CD8-positive, alpha-beta T cell (primary cell): ENCODE measurements at regions of chr4 and their contacts with region 1.

Region 1: DNA sequence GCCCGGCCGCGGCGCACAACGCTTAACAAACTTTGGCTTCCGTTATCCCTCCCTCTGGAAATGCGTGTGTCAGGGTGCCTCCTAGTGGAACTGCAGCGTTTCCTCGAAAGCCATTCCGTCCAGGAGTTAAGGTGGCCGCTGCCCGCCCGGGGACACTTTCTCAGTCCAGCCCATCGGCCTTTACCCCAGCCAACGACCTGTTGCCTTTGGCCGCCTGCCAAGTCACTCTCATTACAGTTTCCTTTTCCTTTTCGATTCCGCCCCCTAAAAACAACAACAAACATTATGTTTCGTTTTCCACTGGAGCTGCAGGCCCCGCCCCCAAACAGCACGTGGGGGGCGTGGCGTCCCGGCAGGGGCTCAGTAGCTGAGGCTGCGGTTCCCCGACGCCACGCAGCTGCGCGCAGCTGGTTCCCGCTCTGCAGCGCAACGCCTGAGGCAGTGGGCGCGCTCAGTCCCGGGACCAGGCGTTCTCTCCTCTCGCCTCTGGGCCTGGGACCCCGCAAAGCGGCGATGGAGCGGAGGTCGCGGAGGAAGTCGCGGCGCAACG is at the start of gene HERC5:
- DNase-seq: peak; percentile 83 to 96 (median 91)
- ATAC-seq: peak; percentile 95
- H3K4me3 ChIP-seq: peak within 1 kb of the TSS; percentile 79 to 87
- H3K4me3 Mint-ChIP-seq: peak within 1 kb of the TSS; percentile 100
- H3K27ac ChIP-seq: peak within 1 kb of the TSS; percentile 63 to 74
- H3K27ac Mint-ChIP-seq: peak within 1 kb of the TSS; percentile 100
- H3K4me1 ChIP-seq: peaks cover 13% of the 10 kb centered on the region
- H3K4me1 Mint-ChIP-seq: peaks cover 33% of the 10 kb centered on the region
- H3K27me3 ChIP-seq: no peaks in the 10 kb centered on the region
- H3K27me3 Mint-ChIP-seq: no peaks in the 10 kb centered on the region
- CTCF ChIP-seq: no peak
- total RNA-seq, gene HERC5: 13.2 to 13.5 TPM

Region 2: GRCh38 chr4:87895964-87896621 is 560.7 kb before region 1 on chr4:
- CTCF ChIA-PET with region 1: no interaction called
- POLR2A ChIA-PET with region 1: no interaction called
- intact Hi-C with region 1: no loop called
- DNase-seq: peak in 4 of 9 experiments; percentile 2 to 32 (median 14)
- ATAC-seq: no peak
- H3K4me3 ChIP-seq: no peak overlapping the region
- H3K4me3 Mint-ChIP-seq: no peak overlapping the region
- H3K27ac ChIP-seq: no peak overlapping the region
- H3K27ac Mint-ChIP-seq: no peak overlapping the region
- H3K4me1 ChIP-seq: no peaks in the 10 kb centered on the region
- H3K4me1 Mint-ChIP-seq: peaks cover 6% of the 10 kb centered on the region
- H3K27me3 ChIP-seq: no peaks in the 10 kb centered on the region
- H3K27me3 Mint-ChIP-seq: peaks cover 6% of the 10 kb centered on the region
- CTCF ChIP-seq: no peak

Region 3: DNA sequence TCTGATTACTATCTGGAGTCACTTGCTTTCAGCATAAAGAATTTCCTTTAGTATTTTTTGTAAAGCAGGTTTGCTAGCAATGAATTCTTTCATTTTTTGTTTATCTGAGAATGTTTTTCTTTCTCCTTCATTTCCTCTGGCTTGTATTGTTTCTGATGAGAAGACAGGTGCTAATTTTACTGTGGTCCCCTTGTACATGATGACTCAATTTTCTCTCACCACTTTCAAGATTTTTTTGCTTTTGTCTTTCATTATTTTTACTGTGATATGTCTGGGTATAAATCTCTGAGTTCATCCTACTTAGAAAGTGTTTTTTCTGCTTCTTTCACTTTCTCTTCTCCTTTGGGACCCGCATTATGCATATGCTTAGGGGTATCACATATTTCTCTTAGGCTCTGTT is 386.8 kb before region 1 on chr4:
- CTCF ChIA-PET with region 1: no interaction called
- POLR2A ChIA-PET with region 1: no interaction called
- intact Hi-C with region 1: no loop called
- DNase-seq: no peak
- ATAC-seq: no peak
- H3K4me3 ChIP-seq: no peak overlapping the region
- H3K4me3 Mint-ChIP-seq: no peak overlapping the region
- H3K27ac ChIP-seq: no peak overlapping the region
- H3K27ac Mint-ChIP-seq: no peak overlapping the region
- H3K4me1 ChIP-seq: no peaks in the 10 kb centered on the region
- H3K4me1 Mint-ChIP-seq: no peaks in the 10 kb centered on the region
- H3K27me3 ChIP-seq: no peaks in the 10 kb centered on the region
- H3K27me3 Mint-ChIP-seq: no peaks in the 10 kb centered on the region
- CTCF ChIP-seq: no peak

Region 4: GRCh38 chr4:88217920-88218319 is 238.9 kb before region 1 on chr4:
- CTCF ChIA-PET with region 1: interaction called, 5 read pairs
- POLR2A ChIA-PET with region 1: no interaction called
- intact Hi-C with region 1: loop called in 1 of 2 experiments (anchors 2 kb)
- DNase-seq: no peak
- ATAC-seq: no peak
- H3K4me3 ChIP-seq: no peak overlapping the region
- H3K4me3 Mint-ChIP-seq: no peak overlapping the region
- H3K27ac ChIP-seq: no peak overlapping the region
- H3K27ac Mint-ChIP-seq: no peak overlapping the region
- H3K4me1 ChIP-seq: no peaks in the 10 kb centered on the region
- H3K4me1 Mint-ChIP-seq: peaks cover 6% of the 10 kb centered on the region
- H3K27me3 ChIP-seq: no peaks in the 10 kb centered on the region
- H3K27me3 Mint-ChIP-seq: peaks cover 8% of the 10 kb centered on the region
- CTCF ChIP-seq: no peak

Region 5: GRCh38 chr4:88251924-88252323 is 204.9 kb before region 1 on chr4:
- CTCF ChIA-PET with region 1: no interaction called
- POLR2A ChIA-PET with region 1: no interaction called
- intact Hi-C with region 1: no loop called
- DNase-seq: no peak
- ATAC-seq: no peak
- H3K4me3 ChIP-seq: no peak overlapping the region
- H3K4me3 Mint-ChIP-seq: no peak overlapping the region
- H3K27ac ChIP-seq: no peak overlapping the region
- H3K27ac Mint-ChIP-seq: no peak overlapping the region
- H3K4me1 ChIP-seq: no peaks in the 10 kb centered on the region
- H3K4me1 Mint-ChIP-seq: no peaks in the 10 kb centered on the region
- H3K27me3 ChIP-seq: no peaks in the 10 kb centered on the region
- H3K27me3 Mint-ChIP-seq: no peaks in the 10 kb centered on the region
- CTCF ChIP-seq: no peak

Region 6: DNA sequence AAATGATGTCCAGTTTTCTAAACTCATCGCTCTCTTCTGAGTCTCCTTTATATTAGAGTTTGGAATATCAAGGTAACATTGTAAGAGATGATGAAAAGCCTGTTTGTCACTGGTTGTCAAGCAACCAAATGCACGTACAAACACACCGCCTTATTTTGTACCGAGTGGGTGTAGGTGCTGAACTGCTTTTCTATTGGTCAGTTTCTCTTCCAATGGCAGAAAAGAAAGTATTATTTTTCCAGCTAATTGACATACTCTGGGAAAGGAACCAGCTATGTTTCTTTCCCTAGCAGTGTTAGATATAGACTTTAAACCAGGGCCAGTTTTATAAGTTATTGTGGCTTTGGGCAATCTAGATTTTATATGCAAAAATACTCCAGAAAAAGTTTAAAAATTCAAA is 165.8 kb before region 1 on chr4:
- CTCF ChIA-PET with region 1: no interaction called
- POLR2A ChIA-PET with region 1: no interaction called
- intact Hi-C with region 1: no loop called
- DNase-seq: no peak
- ATAC-seq: no peak
- H3K4me3 ChIP-seq: no peak overlapping the region
- H3K4me3 Mint-ChIP-seq: no peak overlapping the region
- H3K27ac ChIP-seq: no peak overlapping the region
- H3K27ac Mint-ChIP-seq: no peak overlapping the region
- H3K4me1 ChIP-seq: no peaks in the 10 kb centered on the region
- H3K4me1 Mint-ChIP-seq: no peaks in the 10 kb centered on the region
- H3K27me3 ChIP-seq: no peaks in the 10 kb centered on the region
- H3K27me3 Mint-ChIP-seq: no peaks in the 10 kb centered on the region
- CTCF ChIP-seq: no peak

Region 7: GRCh38 chr4:88378691-88379559 is 77.9 kb before region 1 on chr4 and contains the start of gene HERC6:
- CTCF ChIA-PET with region 1: interaction called, 6 read pairs
- POLR2A ChIA-PET with region 1: interaction called, 13 read pairs
- intact Hi-C with region 1: loop called (anchors 1 to 2 kb)
- DNase-seq: peak; percentile 39 to 93 (median 73)
- ATAC-seq: peak; percentile 63
- H3K4me3 ChIP-seq: peak within 1 kb of the TSS; percentile 82 to 98
- H3K4me3 Mint-ChIP-seq: peak within 1 kb of the TSS; percentile 96
- H3K27ac ChIP-seq: peak within 1 kb of the TSS; percentile 88 to 91
- H3K27ac Mint-ChIP-seq: peak within 1 kb of the TSS; percentile 95
- H3K4me1 ChIP-seq: peaks cover 31% of the 10 kb centered on the region
- H3K4me1 Mint-ChIP-seq: peaks cover 43% of the 10 kb centered on the region
- H3K27me3 ChIP-seq: no peaks in the 10 kb centered on the region
- H3K27me3 Mint-ChIP-seq: no peaks in the 10 kb centered on the region
- CTCF ChIP-seq: peak; percentile 57
- total RNA-seq, gene HERC6: 8.2 TPM

Region 8: GRCh38 chr4:88523325-88524129 is 66.7 kb after region 1 on chr4 and contains the start of gene PYURF:
- CTCF ChIA-PET with region 1: no interaction called
- POLR2A ChIA-PET with region 1: no interaction called
- intact Hi-C with region 1: loop called (anchors 2 to 5 kb)
- DNase-seq: peak; percentile 31 to 87 (median 75)
- ATAC-seq: peak; percentile 76
- H3K4me3 ChIP-seq: peak within 1 kb of the TSS; percentile 78 to 90
- H3K4me3 Mint-ChIP-seq: peak within 1 kb of the TSS; percentile 93
- H3K27ac ChIP-seq: peak within 1 kb of the TSS; percentile 54 to 76
- H3K27ac Mint-ChIP-seq: peak within 1 kb of the TSS; percentile 94
- H3K4me1 ChIP-seq: peaks cover 16% of the 10 kb centered on the region
- H3K4me1 Mint-ChIP-seq: peaks cover 43% of the 10 kb centered on the region
- H3K27me3 ChIP-seq: no peaks in the 10 kb centered on the region
- H3K27me3 Mint-ChIP-seq: no peaks in the 10 kb centered on the region
- CTCF ChIP-seq: no peak
- total RNA-seq, gene PYURF: 25.5 to 27.6 TPM